GM10248 (cell line): ENCODE measurements at regions of chr15 and their contacts with region 1.

Region 1: DNA sequence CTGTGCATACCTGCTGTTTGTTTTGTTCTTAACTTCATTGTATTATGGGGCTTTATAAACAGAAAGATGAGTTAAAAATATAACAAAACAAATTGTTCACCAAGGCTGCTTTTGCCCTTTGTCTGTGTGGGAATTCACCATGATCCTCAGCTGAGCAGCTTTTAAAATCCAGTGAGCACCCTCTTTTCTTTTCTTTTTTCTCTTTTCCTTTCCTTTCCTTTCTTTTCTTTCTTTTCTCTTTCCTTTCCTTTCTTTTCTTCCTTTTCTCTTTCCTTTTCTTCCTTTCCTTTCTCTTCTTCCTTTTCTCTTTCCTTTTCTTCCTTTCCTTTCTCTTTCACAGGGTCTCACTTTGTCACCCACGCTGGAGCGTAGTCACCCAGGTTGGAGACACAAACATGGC is 38.3 kb downstream of the RAB8B start:
- DNase-seq: no peak
- CTCF ChIP-seq: no peak

Region 2: DNA sequence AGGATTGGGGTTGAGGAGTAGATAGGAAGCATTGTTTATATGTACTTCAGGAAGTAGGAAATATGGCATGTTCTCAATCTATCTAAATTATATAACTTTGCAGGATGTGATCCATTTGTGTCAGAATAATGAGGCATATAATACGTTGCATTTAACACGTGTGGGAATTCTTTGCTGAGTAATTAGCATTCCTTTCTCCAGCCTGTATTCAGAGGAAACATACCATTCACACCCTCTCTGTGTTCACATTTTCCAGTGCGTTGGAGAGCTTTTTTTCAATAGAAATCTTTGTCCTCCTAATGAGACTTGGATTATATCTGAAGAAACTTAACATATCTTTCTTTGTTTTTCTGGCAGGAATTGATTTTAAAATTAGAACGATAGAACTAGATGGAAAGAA is 16.7 kb after region 1 on chr15:
- CTCF ChIA-PET with region 1: interaction called, 20 read pairs
- POLR2A ChIA-PET with region 1: no interaction called
- DNase-seq: no peak
- CTCF ChIP-seq: no peak